Heart left ventricle (tissue), 16 donors: ENCODE measurements at regions of chr2 and their contacts with region 1.

Region 1: DNA sequence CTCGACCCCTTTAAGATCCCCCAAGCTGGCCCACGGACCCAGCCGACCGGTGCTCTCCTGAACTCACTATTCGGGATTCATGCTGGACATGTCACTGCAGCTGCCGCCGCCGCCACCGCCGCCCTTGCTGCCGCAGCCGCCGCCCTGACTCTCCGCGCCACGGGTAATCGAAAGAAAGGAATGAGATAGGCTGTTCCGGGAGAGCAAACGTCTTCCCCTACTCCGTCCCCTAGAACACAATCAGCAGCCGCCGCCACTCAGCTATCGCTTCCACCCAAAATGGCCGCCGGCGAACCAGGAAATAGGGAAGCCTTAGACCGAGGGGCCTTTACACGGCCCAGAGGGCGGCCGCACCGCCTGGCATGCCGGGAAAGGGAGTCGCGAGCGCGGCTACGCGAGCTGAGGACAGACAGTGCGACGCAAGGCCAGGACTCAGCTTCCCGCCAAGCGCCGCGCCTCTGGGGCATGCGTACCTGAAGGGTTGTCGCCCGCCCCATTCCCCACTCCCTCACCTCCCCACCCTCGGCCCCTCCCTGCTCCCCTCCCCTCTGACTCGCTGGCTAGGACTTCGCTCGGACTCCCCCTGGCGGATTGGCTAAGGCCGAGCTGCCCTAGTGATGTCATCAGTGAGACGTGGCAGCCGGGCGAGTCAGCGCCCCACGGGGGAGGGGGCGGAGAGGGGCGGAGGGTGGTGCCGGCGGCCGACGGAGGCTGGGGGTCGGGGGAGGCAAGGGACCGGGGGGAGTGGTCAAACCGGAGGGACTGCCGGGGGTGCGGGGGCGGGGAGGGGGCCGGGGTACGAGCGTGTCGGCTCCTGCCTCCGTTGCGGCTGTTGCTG is at the start of gene RAB1A:
- DNase-seq: peak; percentile 100
- ATAC-seq: peak; percentile 97 to 98 (median 98)
- H3K4me3 ChIP-seq: peak within 1 kb of the TSS; percentile 76 to 94 (median 80)
- H3K27ac ChIP-seq: peak within 1 kb of the TSS; percentile 87 to 98 (median 96)
- H3K4me1 ChIP-seq: peaks cover 11 to 58% (median 40%) of the 10 kb centered on the region in 12 donors
- H3K27me3 ChIP-seq: no peaks in the 10 kb centered on the region
- CTCF ChIP-seq: peak; percentile 25 to 70 (median 52)
- POLR2A ChIP-seq: peak; percentile 51 to 62
- total RNA-seq, gene RAB1A: 49.0 to 137 (median 118) TPM

Region 2: DNA sequence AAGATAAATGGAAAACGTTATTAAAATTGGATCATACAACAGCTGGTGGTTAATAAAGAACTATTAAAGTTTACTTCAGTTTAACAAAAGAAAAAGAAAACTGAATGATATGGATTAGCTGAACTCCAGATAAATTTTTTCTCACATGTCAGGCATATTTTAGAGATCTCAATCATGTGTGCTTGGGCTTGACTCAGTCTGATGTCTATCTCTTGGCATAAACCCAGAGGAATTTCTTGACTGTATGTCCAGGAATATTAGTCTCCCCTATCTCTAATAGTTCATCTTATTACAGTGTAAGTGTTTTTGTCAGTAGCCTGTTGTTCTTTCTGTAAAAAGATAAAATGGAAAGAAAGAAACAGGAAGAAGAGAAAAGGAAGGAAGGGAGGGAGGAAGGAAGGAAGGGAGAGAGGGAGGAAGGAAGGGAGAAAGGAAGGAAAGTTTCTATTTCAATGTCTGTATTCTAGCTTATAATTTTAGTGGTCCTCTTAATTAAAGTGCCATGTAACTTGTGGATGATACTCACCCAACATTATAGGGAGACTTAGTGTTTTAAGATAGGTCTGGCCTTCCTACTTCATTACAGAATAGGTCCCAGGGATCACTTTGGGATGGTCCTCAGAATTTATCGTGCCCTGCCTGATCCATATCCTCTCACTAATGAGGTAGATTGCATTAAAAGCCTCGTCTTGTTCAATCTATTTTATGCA is 1388.0 kb before region 1 on chr2:
- intact Hi-C with region 1: no loop called
- DNase-seq: no peak
- ATAC-seq: no peak
- H3K4me3 ChIP-seq: no peak overlapping the region
- H3K27ac ChIP-seq: no peak overlapping the region
- H3K4me1 ChIP-seq: peaks cover 0 to 19% (median 4%) of the 10 kb centered on the region in 12 donors
- H3K27me3 ChIP-seq: no peaks in the 10 kb centered on the region
- CTCF ChIP-seq: no peak
- POLR2A ChIP-seq: no peak

Region 3: GRCh38 chr2:64504774-64505720 is 625.0 kb before region 1 on chr2:
- intact Hi-C with region 1: no loop called
- DNase-seq: no peak
- ATAC-seq: no peak
- H3K4me3 ChIP-seq: no peak overlapping the region
- H3K27ac ChIP-seq: no peak overlapping the region
- H3K4me1 ChIP-seq: no peaks in the 10 kb centered on the region
- H3K27me3 ChIP-seq: no peaks in the 10 kb centered on the region
- CTCF ChIP-seq: no peak
- POLR2A ChIP-seq: no peak

Region 4: DNA sequence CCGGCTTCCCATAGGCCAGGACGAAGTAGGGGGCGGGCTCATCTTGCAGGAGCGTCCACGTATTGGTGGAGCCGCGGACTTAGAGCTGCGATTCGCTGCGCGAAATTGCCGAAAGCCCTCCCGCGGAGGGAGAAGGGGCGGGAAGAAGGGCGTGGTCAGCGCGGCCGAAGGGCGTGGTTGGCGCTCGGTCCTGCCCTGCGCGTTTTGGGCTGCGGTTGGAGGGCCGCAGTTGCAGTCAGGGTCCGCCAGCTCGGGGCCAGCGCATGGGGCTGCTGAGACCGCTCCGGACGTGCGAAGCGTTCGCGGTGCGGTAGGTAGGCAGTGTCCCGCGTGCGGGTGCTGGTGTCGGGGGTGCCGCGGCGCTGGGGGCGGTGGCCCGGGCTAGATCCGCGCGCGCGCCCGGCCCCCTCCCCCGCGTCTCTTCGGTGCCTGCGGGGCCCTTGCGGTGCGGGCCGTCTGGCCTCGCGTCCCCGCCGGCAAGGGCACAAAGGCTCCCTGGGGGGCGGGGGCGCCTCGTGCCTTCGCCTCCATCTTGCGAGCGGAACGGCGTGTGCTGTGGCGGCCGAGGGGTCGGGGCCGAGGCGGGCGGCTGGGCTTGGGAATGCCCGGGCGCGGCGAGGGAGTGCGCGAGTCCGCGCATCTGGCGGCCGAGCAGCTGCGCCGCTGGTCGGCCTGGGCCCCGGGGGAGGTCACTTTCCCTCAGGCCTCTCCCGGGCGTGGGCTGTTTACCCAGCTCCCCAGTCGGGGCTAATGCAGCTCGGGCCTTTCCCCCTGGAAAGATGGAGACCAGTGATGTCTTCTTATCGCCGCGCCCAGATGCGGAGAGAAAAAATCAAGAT is 73.6 kb before region 1 on chr2 and contains the start of gene CEP68:
- intact Hi-C with region 1: loop called in 3 of 10 experiments (anchors 1 to 5 kb)
- DNase-seq: peak; percentile 98
- ATAC-seq: peak; percentile 98 to 99 (median 98)
- H3K4me3 ChIP-seq: peak within 1 kb of the TSS; percentile 60 to 92 (median 86)
- H3K27ac ChIP-seq: peak within 1 kb of the TSS; percentile 81 to 95 (median 90)
- H3K4me1 ChIP-seq: peaks cover 4 to 78% (median 47%) of the 10 kb centered on the region in 12 donors
- H3K27me3 ChIP-seq: no peaks in the 10 kb centered on the region
- CTCF ChIP-seq: no peak
- POLR2A ChIP-seq: peak; percentile 39 to 96
- total RNA-seq, gene CEP68: 14.0 to 26.8 (median 18.8) TPM

Region 5: DNA sequence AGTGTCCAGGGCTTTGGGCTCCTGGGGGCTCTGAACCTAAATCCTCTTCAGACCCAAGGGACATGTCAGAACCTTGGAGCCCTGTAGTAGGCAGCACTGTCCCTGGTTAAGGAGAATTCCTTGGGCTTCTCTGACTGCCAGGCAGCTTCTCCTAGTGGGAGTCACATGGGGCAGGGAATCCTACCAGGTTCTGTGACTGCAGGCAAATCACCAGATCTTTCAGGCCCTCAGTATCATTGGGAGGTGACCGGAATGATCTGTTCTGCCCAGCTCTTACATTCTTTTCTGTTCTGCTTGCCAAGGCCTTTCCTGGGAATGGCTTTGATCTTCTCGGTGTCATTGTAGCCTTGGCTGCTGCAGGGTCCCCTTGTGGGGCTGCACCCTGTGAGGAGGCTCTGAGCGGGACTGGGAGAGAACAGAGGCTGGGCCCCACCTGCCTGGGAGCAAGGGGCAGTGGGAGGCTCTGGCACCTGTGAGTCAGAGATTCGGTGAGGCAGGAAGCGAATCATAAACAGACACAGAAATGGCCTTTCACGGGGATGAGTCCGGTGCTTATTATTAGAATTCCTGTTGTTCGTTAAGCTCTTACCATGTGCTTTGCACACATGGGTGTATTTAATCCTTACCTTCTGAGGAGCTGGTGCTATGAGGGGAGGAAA is 59.7 kb before region 1 on chr2:
- intact Hi-C with region 1: loop called in 8 of 10 experiments (anchors 5 kb)
- DNase-seq: no peak
- ATAC-seq: peak; percentile 25 to 53 (median 44)
- H3K4me3 ChIP-seq: no peak overlapping the region
- H3K27ac ChIP-seq: peak overlapping the region in 11 of 12 donors; percentile 12 to 66 (median 44)
- H3K4me1 ChIP-seq: peaks cover 10 to 82% (median 61%) of the 10 kb centered on the region in 12 donors
- H3K27me3 ChIP-seq: no peaks in the 10 kb centered on the region
- CTCF ChIP-seq: peak in 6 of 12 donors; percentile 15 to 33 (median 31)
- POLR2A ChIP-seq: no peak

Region 6: GRCh38 chr2:65081232-65081685 is 48.8 kb before region 1 on chr2:
- intact Hi-C with region 1: loop called in 5 of 10 experiments (anchors 5 kb)
- DNase-seq: peak in 1 of 5 donors; percentile 44
- ATAC-seq: peak; percentile 34 to 77 (median 64)
- H3K4me3 ChIP-seq: no peak overlapping the region
- H3K27ac ChIP-seq: peak overlapping the region in 7 of 12 donors; percentile 14 to 72 (median 36)
- H3K4me1 ChIP-seq: peaks cover 1 to 33% (median 20%) of the 10 kb centered on the region in 12 donors
- H3K27me3 ChIP-seq: no peaks in the 10 kb centered on the region
- CTCF ChIP-seq: no peak
- POLR2A ChIP-seq: no peak

Region 7: GRCh38 chr2:65108780-65109179 is 21.3 kb before region 1 on chr2:
- intact Hi-C with region 1: loop called in 1 of 10 experiments (anchors 2 kb)
- DNase-seq: no peak
- ATAC-seq: no peak
- H3K4me3 ChIP-seq: no peak overlapping the region
- H3K27ac ChIP-seq: no peak overlapping the region
- H3K4me1 ChIP-seq: peaks cover 0 to 41% (median 15%) of the 10 kb centered on the region in 12 donors
- H3K27me3 ChIP-seq: no peaks in the 10 kb centered on the region
- CTCF ChIP-seq: no peak
- POLR2A ChIP-seq: no peak

Region 8: DNA sequence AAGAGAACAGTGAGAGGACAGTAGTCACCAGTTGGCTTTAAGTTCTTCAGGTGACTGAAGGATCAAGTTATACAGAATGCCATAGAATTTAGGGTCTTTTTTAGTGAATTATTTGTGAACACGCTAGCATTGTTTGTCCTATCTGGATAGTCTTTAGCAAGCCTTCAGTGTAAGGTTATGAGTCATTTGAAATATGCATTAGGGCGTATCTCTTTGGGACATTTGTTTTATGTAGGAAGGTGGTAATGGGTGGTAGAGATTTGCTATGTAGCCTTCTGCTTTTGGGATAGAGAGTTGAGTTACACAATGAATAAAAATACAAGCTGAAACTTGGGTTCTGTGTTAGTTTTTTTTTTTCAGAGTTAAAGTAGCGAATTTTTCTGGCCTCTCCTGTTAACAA is 110.6 kb after region 1 on chr2:
- intact Hi-C with region 1: no loop called
- DNase-seq: no peak
- ATAC-seq: no peak
- H3K4me3 ChIP-seq: no peak overlapping the region
- H3K27ac ChIP-seq: no peak overlapping the region
- H3K4me1 ChIP-seq: peaks cover 0 to 35% (median 6%) of the 10 kb centered on the region in 12 donors
- H3K27me3 ChIP-seq: no peaks in the 10 kb centered on the region
- CTCF ChIP-seq: no peak
- POLR2A ChIP-seq: no peak

Region 9: GRCh38 chr2:65443509-65444201 is 313.6 kb after region 1 on chr2:
- intact Hi-C with region 1: no loop called
- DNase-seq: no peak
- ATAC-seq: no peak
- H3K4me3 ChIP-seq: no peak overlapping the region
- H3K27ac ChIP-seq: no peak overlapping the region
- H3K4me1 ChIP-seq: no peaks in the 10 kb centered on the region
- H3K27me3 ChIP-seq: no peaks in the 10 kb centered on the region
- CTCF ChIP-seq: no peak
- POLR2A ChIP-seq: no peak